HCT116 (cell line): ENCODE measurements at regions of chr9 and their contacts with region 1.

Region 1: GRCh38 chr9:5799314-5799713 is 33.6 kb downstream of the ERMP1 start:
- DNase-seq: peak; percentile 16
- ATAC-seq: no peak
- H3K4me3 ChIP-seq: no peak overlapping the region
- H3K27ac ChIP-seq: no peak overlapping the region
- H3K4me1 ChIP-seq: no peaks in the 10 kb centered on the region
- H3K27me3 ChIP-seq: no peaks in the 10 kb centered on the region
- CTCF ChIP-seq: peak; percentile 64 to 68 (median 67); a peak in 5 of 6 replicates
- POLR2A ChIP-seq: no peak
- RAD21 ChIP-seq: peak; percentile 78

Region 2: DNA sequence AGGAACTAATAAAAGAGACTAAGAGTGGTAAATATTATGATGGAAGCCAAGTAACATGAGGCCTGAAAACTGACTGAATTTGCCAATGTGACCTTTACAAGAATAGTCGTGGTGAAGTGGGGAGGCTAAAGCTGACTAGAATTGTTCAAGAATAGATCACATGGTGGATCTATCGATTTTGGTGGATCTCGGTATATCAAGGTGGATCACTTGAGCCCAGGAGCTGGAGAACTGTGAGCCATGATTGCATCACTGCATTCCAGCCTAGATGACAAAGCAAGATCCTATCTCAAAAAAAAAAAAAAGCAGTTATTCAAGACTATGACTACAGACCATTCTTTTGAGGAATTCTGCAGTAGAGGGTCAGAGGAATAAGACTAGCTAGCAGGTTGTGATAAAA is 18.6 kb after region 1 on chr9:
- CTCF ChIA-PET with region 1: no interaction called
- POLR2A ChIA-PET with region 1: no interaction called
- RAD21 ChIA-PET with region 1: no interaction called
- intact Hi-C with region 1: no loop called
- DNase-seq: peak; percentile 53
- ATAC-seq: peak; percentile 70
- H3K4me3 ChIP-seq: no peak overlapping the region
- H3K27ac ChIP-seq: peak overlapping the region; percentile 39; the same call in 1 of the 2 replicates
- H3K4me1 ChIP-seq: peaks cover 15 to 20% of the 10 kb centered on the region in 2 experiments
- H3K27me3 ChIP-seq: no peaks in the 10 kb centered on the region
- CTCF ChIP-seq: no peak
- POLR2A ChIP-seq: no peak
- RAD21 ChIP-seq: no peak

Region 3: DNA sequence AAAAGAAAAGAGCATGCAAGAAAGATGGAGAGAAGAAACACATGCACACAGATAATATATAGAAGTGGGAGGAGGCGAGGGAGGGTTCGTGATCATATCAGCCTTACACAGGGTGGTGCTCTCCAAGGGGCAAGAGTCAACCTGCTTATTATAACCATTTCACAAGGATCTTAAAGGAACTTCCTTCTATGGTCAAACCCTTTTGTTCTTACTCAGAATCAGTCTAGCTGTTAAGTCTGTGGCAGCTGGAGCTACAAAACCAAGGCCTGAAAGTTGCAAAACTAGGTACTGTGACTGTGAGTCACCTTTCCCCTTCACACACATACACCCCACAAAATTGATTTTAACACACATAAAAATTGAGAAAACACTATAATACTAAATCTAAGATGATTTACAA is 52.1 kb after region 1 on chr9:
- CTCF ChIA-PET with region 1: no interaction called
- POLR2A ChIA-PET with region 1: no interaction called
- RAD21 ChIA-PET with region 1: no interaction called
- intact Hi-C with region 1: no loop called
- DNase-seq: no peak
- ATAC-seq: no peak
- H3K4me3 ChIP-seq: no peak overlapping the region
- H3K27ac ChIP-seq: no peak overlapping the region
- H3K4me1 ChIP-seq: peaks cover 0 to 6% of the 10 kb centered on the region in 2 experiments; a peak in 1 of 4 replicates
- H3K27me3 ChIP-seq: no peaks in the 10 kb centered on the region
- CTCF ChIP-seq: no peak
- POLR2A ChIP-seq: no peak
- RAD21 ChIP-seq: no peak

Region 4: GRCh38 chr9:5879419-5880181 is 80.3 kb after region 1 on chr9:
- CTCF ChIA-PET with region 1: interaction called, 7 read pairs
- POLR2A ChIA-PET with region 1: interaction called, 5 read pairs
- RAD21 ChIA-PET with region 1: no interaction called
- intact Hi-C with region 1: loop called (anchors 5 kb)
- DNase-seq: peak; percentile 88
- ATAC-seq: peak; percentile 94
- H3K4me3 ChIP-seq: peak overlapping the region; percentile 25 to 44
- H3K27ac ChIP-seq: peak overlapping the region; percentile 57; the same call in 1 of the 2 replicates
- H3K4me1 ChIP-seq: peaks cover 12 to 43% of the 10 kb centered on the region in 2 experiments; a peak in 3 of 4 replicates
- H3K27me3 ChIP-seq: no peaks in the 10 kb centered on the region
- CTCF ChIP-seq: no peak
- POLR2A ChIP-seq: no peak
- RAD21 ChIP-seq: 0 out of 2 replicates have a peak, but pooled peaks have one; percentile 13

Region 5: DNA sequence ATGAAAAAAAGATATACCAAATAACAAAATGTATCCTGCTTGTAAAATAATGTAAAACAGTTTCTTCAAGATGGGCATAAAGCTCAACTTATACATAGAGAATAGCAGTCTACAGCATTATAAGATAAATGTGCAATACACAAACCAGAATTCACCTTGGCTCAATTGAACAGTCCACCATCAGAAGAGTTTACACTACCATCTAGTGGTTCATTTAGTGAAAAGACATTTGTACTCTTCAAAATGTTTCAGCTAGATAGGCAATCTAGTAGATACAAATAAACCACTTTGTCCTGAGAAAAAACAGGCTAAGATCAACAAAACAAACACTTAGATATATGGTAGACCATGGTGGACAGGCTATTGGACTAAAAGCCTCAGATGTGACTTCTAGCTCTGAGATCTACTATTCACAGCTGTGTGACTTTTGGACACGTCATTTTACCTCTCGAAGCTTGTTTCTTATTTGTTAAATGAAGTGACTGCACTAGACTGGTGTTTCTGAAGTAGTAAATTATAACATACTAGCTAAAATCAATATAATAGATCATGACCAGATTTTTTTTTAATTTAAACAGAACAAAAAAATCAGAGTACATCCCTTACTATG is 506.7 kb after region 1 on chr9:
- CTCF ChIA-PET with region 1: interaction called, 3 read pairs
- POLR2A ChIA-PET with region 1: no interaction called
- RAD21 ChIA-PET with region 1: no interaction called
- intact Hi-C with region 1: loop called (anchors 1 kb)
- DNase-seq: peak; percentile 32
- ATAC-seq: peak; percentile 78
- H3K4me3 ChIP-seq: no peak overlapping the region
- H3K27ac ChIP-seq: no peak overlapping the region
- H3K4me1 ChIP-seq: peaks cover 3 to 6% of the 10 kb centered on the region in 2 experiments; a peak in 1 of 4 replicates
- H3K27me3 ChIP-seq: no peaks in the 10 kb centered on the region
- CTCF ChIP-seq: peak; percentile 48 to 81 (median 69)
- POLR2A ChIP-seq: no peak
- RAD21 ChIP-seq: peak; percentile 89